Activated T-helper 2 cell treated with anti-CD3 and anti-CD28 coated beads, Interferon-gamma antibody, Interleukin-2, Interleukin-4, amounts not matched to agents 10 μg/mL and 5 μg/mL and 100 μg/mL, durations not matched to agents 14 hours and 24 hours and 36 hours (primary cell): ENCODE measurements at regions of chr1 and their contacts with region 1.

Region 1: DNA sequence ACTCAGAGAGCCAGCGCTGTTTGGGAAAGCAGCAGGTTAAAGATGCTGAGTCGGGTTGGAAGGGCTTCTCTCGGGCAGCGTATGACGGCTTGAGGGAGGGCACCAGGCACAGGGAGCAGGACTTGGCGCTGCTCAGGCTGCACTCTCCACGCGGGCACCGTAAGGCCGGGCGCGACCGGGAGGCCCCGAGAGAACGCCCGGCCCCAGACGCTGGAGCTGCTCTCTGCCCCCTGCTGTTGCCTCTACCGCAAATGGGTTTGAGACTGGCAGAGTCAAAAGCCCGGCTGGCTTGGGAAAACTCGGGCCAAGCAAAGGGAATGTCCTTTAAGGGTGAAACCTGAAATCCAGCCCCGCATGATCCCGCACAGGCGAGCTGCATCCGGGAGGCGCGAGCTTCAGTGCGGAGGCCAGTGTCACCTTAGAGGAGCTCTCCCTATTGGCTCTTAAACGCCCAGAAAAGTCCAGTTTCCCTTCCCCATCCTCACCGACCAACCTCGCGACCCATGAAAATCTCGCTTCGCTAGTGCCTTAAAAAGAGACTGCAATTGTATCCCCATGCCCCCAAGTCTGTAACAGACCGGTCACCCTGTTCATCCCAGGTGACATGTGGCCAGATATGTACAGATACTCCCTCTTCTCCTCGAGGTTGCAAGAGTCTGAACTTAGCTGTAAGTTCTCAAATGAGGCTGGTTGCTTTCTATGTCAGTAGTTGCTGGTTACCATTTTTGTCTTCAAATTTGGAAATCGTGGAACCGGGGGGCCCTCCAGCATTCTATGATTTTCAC is 1.1 kb downstream of the PRRX1 start:
- DNase-seq: no peak
- H3K4me3 Mint-ChIP-seq: no peak overlapping the region
- H3K27ac Mint-ChIP-seq: no peak overlapping the region
- H3K4me1 Mint-ChIP-seq: peaks cover 10% of the 10 kb centered on the region
- H3K27me3 Mint-ChIP-seq: peaks cover 86% of the 10 kb centered on the region

Region 2: GRCh38 chr1:170513138-170513537 is 151.9 kb before region 1 on chr1:
- intact Hi-C with region 1: loop called (anchors 10 kb)
- DNase-seq: no peak
- H3K4me3 Mint-ChIP-seq: no peak overlapping the region
- H3K27ac Mint-ChIP-seq: no peak overlapping the region
- H3K4me1 Mint-ChIP-seq: no peaks in the 10 kb centered on the region
- H3K27me3 Mint-ChIP-seq: peaks cover 9% of the 10 kb centered on the region

Region 3: GRCh38 chr1:170593173-170594011 is 71.6 kb before region 1 on chr1:
- intact Hi-C with region 1: loop called (anchors 10 kb)
- DNase-seq: no peak
- H3K4me3 Mint-ChIP-seq: no peak overlapping the region
- H3K27ac Mint-ChIP-seq: no peak overlapping the region
- H3K4me1 Mint-ChIP-seq: peaks cover 4% of the 10 kb centered on the region
- H3K27me3 Mint-ChIP-seq: peaks cover 22% of the 10 kb centered on the region